HCT116 (cell line): ENCODE measurements at regions of chr4 and their contacts with region 1.

Region 1: GRCh38 chr4:83771113-83771705 is 235.3 kb downstream of the GPAT3 start:
- DNase-seq: peak; percentile 51
- ATAC-seq: peak; percentile 96
- H3K4me3 ChIP-seq: no peak overlapping the region
- H3K27ac ChIP-seq: no peak overlapping the region
- H3K4me1 ChIP-seq: no peaks in the 10 kb centered on the region
- H3K27me3 ChIP-seq: no peaks in the 10 kb centered on the region
- CTCF ChIP-seq: peak; percentile 65 to 85 (median 83); a peak in 5 of 6 replicates
- POLR2A ChIP-seq: no peak
- RAD21 ChIP-seq: peak; percentile 89

Region 2: DNA sequence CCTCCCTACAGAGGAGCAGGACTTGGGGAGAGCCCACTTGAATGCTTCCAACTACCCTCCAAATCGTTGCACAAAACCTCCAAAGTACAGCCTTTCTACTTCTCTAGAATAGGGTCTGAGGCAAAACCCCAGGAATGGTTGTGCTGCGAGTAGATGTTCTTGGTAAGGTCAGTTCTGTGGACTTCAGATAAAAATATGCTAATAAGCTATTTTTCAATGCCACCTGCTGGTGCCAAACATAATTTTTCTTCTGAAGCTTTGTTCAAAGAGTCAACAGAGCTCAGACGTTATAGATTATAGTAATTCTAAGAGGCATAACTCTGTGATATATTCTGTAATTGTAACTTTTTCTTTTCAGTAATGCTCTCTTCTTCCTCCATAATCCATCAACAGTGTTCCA is 190.4 kb after region 1 on chr4:
- CTCF ChIA-PET with region 1: interaction called, 15 read pairs
- POLR2A ChIA-PET with region 1: no interaction called
- RAD21 ChIA-PET with region 1: interaction called in 1 of 2 experiments, 7 read pairs
- intact Hi-C with region 1: loop called (anchors 2 kb)
- DNase-seq: no peak
- ATAC-seq: peak; percentile 40; the same call in 1 of the 2 replicates
- H3K4me3 ChIP-seq: no peak overlapping the region
- H3K27ac ChIP-seq: no peak overlapping the region
- H3K4me1 ChIP-seq: no peaks in the 10 kb centered on the region
- H3K27me3 ChIP-seq: no peaks in the 10 kb centered on the region
- CTCF ChIP-seq: peak in 2 of 3 experiments; percentile 36 to 45; a peak in 1 of 6 replicates
- POLR2A ChIP-seq: no peak
- RAD21 ChIP-seq: peak; percentile 62

Region 3: DNA sequence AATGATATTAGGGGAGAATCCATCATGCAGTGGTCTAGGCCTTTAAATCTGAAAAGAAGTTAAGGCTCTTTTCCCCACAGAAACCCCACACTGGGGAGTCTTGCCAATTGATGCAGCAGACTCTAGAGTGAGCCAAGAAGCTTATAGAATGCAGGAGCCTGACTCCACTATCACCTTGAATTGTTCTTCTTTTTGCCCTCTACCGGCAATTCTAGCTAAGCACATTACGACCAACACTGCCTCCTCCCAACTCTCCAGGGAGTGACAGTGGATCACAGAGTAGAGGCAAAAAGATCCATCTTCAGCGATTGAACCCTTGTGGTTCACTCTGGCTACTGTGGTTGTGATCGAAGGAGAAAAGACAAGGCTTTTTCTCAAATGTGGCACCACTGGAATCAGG is 396.4 kb after region 1 on chr4:
- CTCF ChIA-PET with region 1: interaction called, 3 read pairs
- POLR2A ChIA-PET with region 1: no interaction called
- RAD21 ChIA-PET with region 1: no interaction called
- intact Hi-C with region 1: loop called (anchors 1 kb)
- DNase-seq: no peak
- ATAC-seq: peak; percentile 84
- H3K4me3 ChIP-seq: no peak overlapping the region
- H3K27ac ChIP-seq: no peak overlapping the region
- H3K4me1 ChIP-seq: no peaks in the 10 kb centered on the region
- H3K27me3 ChIP-seq: no peaks in the 10 kb centered on the region
- CTCF ChIP-seq: peak; percentile 16 to 34 (median 31); a peak in 4 of 6 replicates
- POLR2A ChIP-seq: no peak
- RAD21 ChIP-seq: peak; percentile 19; the same call in 1 of the 2 replicates

Region 4: DNA sequence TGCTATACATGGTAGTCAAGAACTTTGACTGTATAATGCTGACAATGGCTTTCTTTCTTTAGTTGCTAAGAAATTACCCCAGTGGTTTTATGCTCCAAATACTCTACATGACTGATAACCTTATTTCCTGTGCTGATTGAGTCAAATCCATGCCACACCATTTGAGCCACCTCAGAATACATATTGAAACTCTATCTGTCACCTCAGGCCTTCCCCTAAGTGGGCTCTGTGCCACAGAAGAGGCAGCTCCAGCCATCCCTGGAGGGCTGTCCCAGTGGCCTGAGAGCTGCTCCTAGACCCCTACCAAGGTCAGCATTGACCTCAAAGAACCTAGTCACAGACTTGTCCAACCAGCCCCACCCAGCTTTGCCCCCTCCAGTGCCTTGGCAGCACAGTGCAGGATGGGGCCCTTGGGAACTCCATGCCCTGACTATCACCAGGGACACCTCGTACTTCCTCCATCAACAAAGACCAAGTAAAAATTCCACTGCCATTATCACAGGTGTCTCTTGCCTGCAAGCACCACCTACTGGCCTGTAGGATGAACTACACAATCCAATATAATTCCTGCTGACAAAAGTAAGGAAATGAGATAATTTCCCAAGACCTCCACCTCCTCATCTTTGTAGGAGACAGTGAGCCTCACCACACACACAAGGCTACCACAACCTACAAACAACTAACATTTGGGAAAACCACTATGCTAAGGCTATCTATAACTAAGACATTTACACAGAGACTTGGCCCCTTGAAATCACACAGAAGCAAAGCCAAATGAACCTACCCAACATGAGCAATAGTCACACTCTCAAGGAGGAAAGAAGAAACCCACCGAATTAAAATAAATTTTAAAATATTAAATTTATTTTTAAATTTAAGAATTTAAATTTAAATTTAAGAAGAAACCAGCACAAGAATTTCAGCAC is 488.0 kb after region 1 on chr4:
- CTCF ChIA-PET with region 1: interaction called, 3 read pairs
- POLR2A ChIA-PET with region 1: no interaction called
- RAD21 ChIA-PET with region 1: no interaction called
- intact Hi-C with region 1: loop called (anchors 5 kb)
- DNase-seq: peak; percentile 13
- ATAC-seq: peak; percentile 78
- H3K4me3 ChIP-seq: no peak overlapping the region
- H3K27ac ChIP-seq: no peak overlapping the region
- H3K4me1 ChIP-seq: no peaks in the 10 kb centered on the region
- H3K27me3 ChIP-seq: no peaks in the 10 kb centered on the region
- CTCF ChIP-seq: peak; percentile 48 to 82 (median 76); a peak in 5 of 6 replicates
- POLR2A ChIP-seq: no peak
- RAD21 ChIP-seq: peak; percentile 72